Activated T-helper 1 cell treated with anti-CD3 and anti-CD28 coated beads, Interleukin-12 subunit alpha, Interleukin-12 subunit beta, Interleukin-2, Interleukin-4 antibody, amounts not matched to agents 30 ng/mL and 10 ng/mL and 1 ng/mL, durations not matched to agents 14 hours and 24 hours and 36 hours (primary cell): ENCODE measurements at regions of chr1 and their contacts with region 1.

Region 1: GRCh38 chr1:155127105-155127964 is at the start of gene EFNA1:
- DNase-seq: peak; percentile 34
- H3K4me3 Mint-ChIP-seq: peak within 1 kb of the TSS; percentile 82
- H3K27ac Mint-ChIP-seq: no peak within 1 kb of the TSS
- H3K4me1 Mint-ChIP-seq: peaks cover 19% of the 10 kb centered on the region
- H3K27me3 Mint-ChIP-seq: peaks cover 53% of the 10 kb centered on the region
- total RNA-seq, gene EFNA1: not detected in 2 replicates

Region 2: GRCh38 chr1:155091071-155091709 is 36.1 kb before region 1 on chr1:
- intact Hi-C with region 1: loop called (anchors 5 kb)
- DNase-seq: peak; percentile 69
- H3K4me3 Mint-ChIP-seq: no peak overlapping the region
- H3K27ac Mint-ChIP-seq: no peak overlapping the region
- H3K4me1 Mint-ChIP-seq: peaks cover 7% of the 10 kb centered on the region
- H3K27me3 Mint-ChIP-seq: peaks cover 19% of the 10 kb centered on the region

Region 3: DNA sequence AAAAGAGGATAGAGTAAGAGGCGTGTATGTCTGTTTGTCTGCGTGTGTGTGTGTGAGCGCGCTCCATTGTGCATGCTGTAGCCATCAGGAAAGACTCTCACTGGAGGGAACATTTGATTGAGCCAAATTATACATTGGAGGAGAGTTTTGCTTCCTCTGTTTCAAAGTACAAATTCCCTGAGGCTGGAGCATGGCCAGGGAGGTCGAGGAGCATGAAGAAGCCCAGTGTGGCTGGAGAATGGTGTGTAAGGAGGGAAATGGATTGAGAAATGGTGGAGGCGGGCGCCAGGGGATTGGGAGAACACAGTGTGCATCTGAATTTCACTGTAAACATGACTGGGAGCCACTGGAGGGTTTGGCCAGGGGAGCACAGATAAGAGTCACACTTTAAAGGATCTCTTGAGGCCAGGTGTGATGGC is 21.7 kb before region 1 on chr1:
- intact Hi-C with region 1: no loop called
- DNase-seq: no peak
- H3K4me3 Mint-ChIP-seq: no peak overlapping the region
- H3K27ac Mint-ChIP-seq: no peak overlapping the region
- H3K4me1 Mint-ChIP-seq: no peaks in the 10 kb centered on the region
- H3K27me3 Mint-ChIP-seq: peaks cover 9% of the 10 kb centered on the region